ENCODE measurements at regions of chr9 and their contacts with region 1.

Region 1: GRCh38 chr9:2837915-2838314 is 6.0 kb downstream of the PUM3 start:
- DNase-seq: no peak
- H3K4me3 Mint-ChIP-seq: no peak overlapping the region
- H3K27ac Mint-ChIP-seq: no peak overlapping the region
- H3K4me1 Mint-ChIP-seq: peaks cover 30% of the 10 kb centered on the region
- H3K27me3 Mint-ChIP-seq: no peaks in the 10 kb centered on the region

Region 2: GRCh38 chr9:2821855-2822254 is 16.1 kb before region 1 on chr9:
- intact Hi-C with region 1: loop called (anchors 2 kb)
- DNase-seq: no peak
- H3K4me3 Mint-ChIP-seq: no peak overlapping the region
- H3K27ac Mint-ChIP-seq: no peak overlapping the region
- H3K4me1 Mint-ChIP-seq: peaks cover 9% of the 10 kb centered on the region
- H3K27me3 Mint-ChIP-seq: no peaks in the 10 kb centered on the region

Region 3: GRCh38 chr9:2923766-2924379 is 86.0 kb after region 1 on chr9:
- intact Hi-C with region 1: no loop called
- DNase-seq: no peak
- H3K4me3 Mint-ChIP-seq: no peak overlapping the region
- H3K27ac Mint-ChIP-seq: no peak overlapping the region
- H3K4me1 Mint-ChIP-seq: no peaks in the 10 kb centered on the region
- H3K27me3 Mint-ChIP-seq: peaks cover 3% of the 10 kb centered on the region

Measured in activated T-helper 1 cell treated with anti-CD3 and anti-CD28 coated beads, Interleukin-12 subunit alpha, Interleukin-12 subunit beta, Interleukin-2, Interleukin-4 antibody, amounts not matched to agents 30 ng/mL and 10 ng/mL and 1 ng/mL, durations not matched to agents 14 hours and 24 hours and 36 hours (primary cell).